ENCODE measurements at regions of chr14 and their contacts with region 1.

Region 1: DNA sequence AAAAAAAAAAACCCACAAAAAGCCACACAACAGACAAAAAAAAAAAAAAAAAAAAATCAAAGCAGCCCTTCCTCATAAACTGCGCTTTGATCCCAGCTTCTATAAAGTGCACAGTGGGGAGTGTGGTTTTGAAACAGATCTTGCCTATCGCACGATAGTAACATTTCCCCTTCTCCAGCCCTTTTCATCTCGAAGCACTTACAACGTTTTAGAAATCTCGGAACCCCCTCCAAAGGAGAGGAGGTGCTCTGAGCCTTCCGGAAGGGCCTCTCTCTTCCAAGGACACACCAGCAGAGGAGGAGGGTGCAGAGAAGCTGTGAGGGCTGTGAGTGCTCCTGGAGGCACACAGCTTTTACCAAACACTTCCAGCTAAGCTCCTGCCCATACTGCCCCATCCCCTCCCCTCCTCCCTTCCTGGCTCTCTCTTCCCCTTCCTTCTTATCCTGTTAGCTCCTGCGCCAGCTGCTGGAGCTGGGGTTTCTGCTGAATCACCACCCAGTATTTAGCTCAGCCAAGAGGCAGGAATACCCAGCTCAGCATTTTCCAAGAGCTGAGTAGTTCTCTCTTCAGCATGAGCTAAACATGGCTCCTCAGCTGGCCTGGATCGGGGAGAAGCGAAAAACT is 28.4 kb downstream of the SLC7A8 start:
- DNase-seq: peak; percentile 92
- ATAC-seq: peak; percentile 89

Region 2: GRCh38 chr14:23186913-23187654 is 32.0 kb after region 1 on chr14:
- intact Hi-C with region 1: loop called (anchors 2 kb)
- DNase-seq: no peak
- ATAC-seq: no peak

Region 3: DNA sequence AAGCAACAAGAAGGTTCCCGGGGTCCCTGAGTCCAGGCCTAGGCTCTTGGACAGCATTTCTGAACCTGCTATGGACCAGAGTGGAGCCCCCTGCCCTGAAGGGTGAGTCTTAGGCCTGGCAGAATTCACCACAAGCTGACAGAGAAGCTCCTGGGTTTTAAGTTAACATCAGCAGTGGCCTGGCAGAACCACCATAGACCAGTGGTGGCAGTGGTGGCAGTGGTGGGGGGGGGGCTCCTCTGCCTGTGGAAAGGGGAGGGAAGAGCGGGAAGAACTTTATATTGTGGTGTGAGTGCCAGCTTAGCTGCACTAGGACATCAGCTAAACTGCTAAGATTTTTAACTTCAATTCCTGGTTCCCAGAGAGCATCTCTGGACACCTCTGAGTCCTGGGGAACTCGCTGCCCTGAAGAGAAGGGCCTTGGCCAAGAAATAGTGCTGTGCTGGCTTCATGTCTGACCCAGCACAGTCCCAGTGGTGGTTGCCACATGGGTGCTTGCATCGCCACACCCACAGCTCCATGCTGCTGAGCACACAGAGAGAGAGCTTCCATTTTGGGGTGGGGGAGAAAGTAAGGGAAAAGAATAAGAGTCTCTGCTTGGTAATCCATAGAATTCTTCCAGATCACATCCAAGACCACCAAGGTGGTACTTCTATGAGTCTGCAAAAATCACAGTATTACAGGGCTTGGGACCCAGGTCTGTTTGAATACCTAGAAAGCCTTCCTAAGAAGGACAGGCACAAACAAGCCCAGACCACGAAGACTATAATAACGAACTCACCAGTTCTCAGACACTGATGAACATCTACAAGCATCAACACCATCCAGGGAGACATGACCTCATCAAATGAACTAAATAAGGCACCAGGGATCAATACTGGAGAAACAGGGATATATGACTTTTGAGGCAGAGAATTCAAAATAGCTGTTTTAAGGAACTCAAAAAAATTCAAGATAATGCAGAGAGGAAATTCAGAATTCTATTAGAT is 62.2 kb after region 1 on chr14:
- intact Hi-C with region 1: no loop called
- DNase-seq: no peak
- ATAC-seq: no peak

Region 4: DNA sequence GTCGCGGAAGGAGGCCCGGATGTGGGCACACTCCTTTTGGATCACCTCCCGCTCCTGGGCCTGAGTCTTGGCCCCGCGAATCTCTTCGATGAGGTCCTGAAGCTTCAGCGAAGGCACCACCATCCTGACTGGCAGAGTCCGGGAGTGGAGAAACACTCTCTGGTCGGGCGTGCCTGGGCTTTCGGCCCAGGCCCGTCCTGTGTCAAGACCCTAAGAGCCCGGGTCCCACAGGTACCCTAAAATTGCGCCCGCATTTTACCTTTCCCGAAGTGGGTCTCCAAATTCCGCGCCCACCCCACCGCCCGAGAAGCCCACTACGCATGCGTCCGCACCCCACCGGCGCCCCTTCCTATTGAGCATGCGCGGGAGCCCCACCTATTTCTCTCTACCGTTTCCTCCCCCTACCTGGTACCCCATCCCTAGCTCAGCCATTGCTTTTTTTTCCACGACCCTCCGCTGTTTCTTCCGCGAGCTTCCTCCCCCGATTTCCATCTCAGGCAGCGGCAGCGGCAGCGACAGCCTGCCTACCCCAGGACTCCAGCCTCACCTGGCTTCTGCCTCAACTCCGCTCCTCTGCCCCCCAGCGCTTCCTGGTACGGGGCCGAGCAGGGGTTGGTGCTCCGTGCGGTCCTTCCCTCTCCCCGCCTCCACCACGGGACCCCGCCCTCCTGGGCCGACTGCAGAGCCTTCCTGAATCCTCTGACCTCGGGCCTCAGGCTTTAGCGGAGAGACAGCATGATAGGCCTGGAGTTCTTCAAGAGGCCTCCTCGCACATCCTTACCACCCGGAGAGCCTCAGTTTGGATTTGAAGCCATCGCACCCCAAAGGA is 412.3 kb after region 1 on chr14 and contains the start of gene AP1G2:
- intact Hi-C with region 1: no loop called
- DNase-seq: peak; percentile 95
- ATAC-seq: peak; percentile 76
- total RNA-seq, gene AP1G2: 15.5 TPM

Measured in Right ventricle myocardium inferior (tissue), 1 donor.